PC-3 (cell line): ENCODE measurements at regions of chr1 and their contacts with region 1.

Region 1: GRCh38 chr1:96713649-96714048 is 7.9 kb upstream of the PTBP2 start:
- DNase-seq: no peak
- ATAC-seq: no peak
- H3K4me3 ChIP-seq: no peak overlapping the region
- H3K27ac ChIP-seq: no peak overlapping the region
- H3K4me1 ChIP-seq: no peaks in the 10 kb centered on the region
- H3K27me3 ChIP-seq: peaks cover 18% of the 10 kb centered on the region; the same call in 1 of the 2 replicates
- CTCF ChIP-seq: no peak

Region 2: GRCh38 chr1:96698342-96698983 is 15.2 kb before region 1 on chr1:
- CTCF ChIA-PET with region 1: no interaction called
- POLR2A ChIA-PET with region 1: no interaction called
- intact Hi-C with region 1: no loop called
- DNase-seq: no peak
- ATAC-seq: no peak
- H3K4me3 ChIP-seq: no peak overlapping the region
- H3K27ac ChIP-seq: no peak overlapping the region
- H3K4me1 ChIP-seq: no peaks in the 10 kb centered on the region
- H3K27me3 ChIP-seq: no peaks in the 10 kb centered on the region
- CTCF ChIP-seq: no peak

Region 3: GRCh38 chr1:96746440-96747420 is 33.1 kb after region 1 on chr1:
- CTCF ChIA-PET with region 1: no interaction called
- POLR2A ChIA-PET with region 1: interaction called, 15 read pairs
- intact Hi-C with region 1: no loop called
- DNase-seq: no peak
- ATAC-seq: no peak
- H3K4me3 ChIP-seq: no peak overlapping the region
- H3K27ac ChIP-seq: no peak overlapping the region
- H3K4me1 ChIP-seq: no peaks in the 10 kb centered on the region
- H3K27me3 ChIP-seq: no peaks in the 10 kb centered on the region
- CTCF ChIP-seq: no peak